ENCODE measurements at regions of chr7 and their contacts with region 1.

Region 1: GRCh38 chr7:30164567-30164966 is 29.8 kb downstream of the MTURN start:
- DNase-seq: no peak
- ATAC-seq: peak; percentile 62
- H3K4me3 ChIP-seq: no peak overlapping the region
- H3K4me1 ChIP-seq: peaks cover 14% of the 10 kb centered on the region
- CTCF ChIP-seq: no peak

Region 2: GRCh38 chr7:30276203-30276900 is 111.8 kb after region 1 on chr7:
- intact Hi-C with region 1: loop called in 1 of 2 experiments (anchors 10 kb)
- DNase-seq: peak in 1 of 3 donors; percentile 72
- ATAC-seq: peak; percentile 69
- H3K4me3 ChIP-seq: no peak overlapping the region
- H3K4me1 ChIP-seq: peaks cover 4% of the 10 kb centered on the region
- CTCF ChIP-seq: peak; percentile 42

Region 3: DNA sequence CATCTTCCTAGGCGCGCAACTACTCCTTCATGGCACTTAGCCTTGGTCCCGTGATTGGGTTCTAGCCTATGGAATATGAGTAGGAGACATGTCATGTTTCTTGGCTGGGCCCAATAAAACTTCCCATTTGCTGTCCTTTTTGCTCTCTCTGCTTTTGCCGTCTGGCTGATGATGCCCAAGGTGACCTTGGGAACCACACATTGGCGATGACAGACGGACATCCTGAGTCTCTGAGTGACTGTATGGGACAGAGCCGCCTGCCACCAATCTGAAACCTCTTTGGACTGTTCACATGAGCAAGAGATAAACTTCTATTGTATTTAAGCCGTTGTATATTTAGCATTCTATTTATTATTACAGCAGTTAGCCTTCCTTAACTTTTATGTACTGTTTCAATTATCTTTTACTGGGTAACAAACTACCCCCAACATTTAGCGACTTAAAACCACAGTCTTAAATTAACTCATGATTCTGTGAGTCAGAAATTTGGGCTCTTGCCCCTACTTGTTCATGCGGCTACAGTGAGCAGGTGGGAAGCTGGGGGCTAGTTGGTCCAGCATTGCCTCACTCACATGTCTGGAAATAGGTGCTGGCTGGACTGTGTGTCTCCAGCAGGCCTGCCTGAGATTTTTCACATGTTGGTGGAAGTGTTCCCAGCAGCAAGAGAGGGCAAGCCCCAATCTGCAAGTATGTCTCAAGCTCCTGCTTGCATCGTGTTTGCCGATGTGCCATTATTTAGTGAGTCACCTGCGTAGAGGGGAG is 242.3 kb after region 1 on chr7:
- intact Hi-C with region 1: loop called (anchors 10 kb)
- DNase-seq: no peak
- ATAC-seq: no peak
- H3K4me3 ChIP-seq: no peak overlapping the region
- H3K4me1 ChIP-seq: no peaks in the 10 kb centered on the region
- CTCF ChIP-seq: no peak

Region 4: GRCh38 chr7:30412810-30413504 is 248.4 kb after region 1 on chr7:
- intact Hi-C with region 1: loop called (anchors 10 kb)
- DNase-seq: peak in 1 of 3 donors; percentile 55
- ATAC-seq: peak; percentile 86
- H3K4me3 ChIP-seq: no peak overlapping the region
- H3K4me1 ChIP-seq: no peaks in the 10 kb centered on the region
- CTCF ChIP-seq: no peak

Measured in mucosa of descending colon (tissue), 3 donors.